Psoas muscle (tissue), 8 donors: ENCODE measurements at regions of chr10 and their contacts with region 1.

Region 1: DNA sequence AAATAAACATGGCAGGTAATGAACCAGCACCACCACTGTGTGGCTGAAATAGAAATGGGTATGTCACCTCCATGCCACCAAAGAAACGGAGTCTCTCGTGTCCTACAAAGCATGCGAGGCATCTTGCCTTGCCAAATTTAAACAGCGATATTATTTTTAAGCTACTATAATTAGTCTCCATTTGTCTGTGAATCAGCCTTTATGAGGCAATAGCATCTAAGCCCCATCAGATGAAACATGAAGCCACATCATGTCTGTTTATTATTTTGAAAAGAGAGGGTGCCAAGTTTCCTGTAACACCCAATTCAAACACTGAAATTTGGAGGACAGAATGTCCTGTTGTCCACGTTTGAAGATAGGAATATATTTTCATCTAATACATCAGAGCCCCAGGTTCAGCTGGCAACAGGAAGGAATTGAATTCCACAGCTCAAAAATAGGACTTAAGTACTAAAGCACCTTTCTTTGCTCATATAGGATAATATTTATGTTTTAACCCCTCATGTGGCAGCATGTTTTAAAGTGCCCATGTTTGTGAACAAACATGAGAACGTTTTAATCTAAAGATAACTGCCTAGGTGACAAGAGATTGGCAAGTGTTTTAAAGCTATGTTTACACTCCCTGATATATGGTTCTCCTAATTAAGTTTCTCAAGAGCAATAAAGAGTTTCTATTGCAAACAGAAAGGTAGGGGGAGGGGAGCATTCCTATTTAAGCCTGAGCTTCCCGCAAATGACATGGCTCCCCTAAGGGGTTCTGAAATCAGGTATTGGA is 86.8 kb downstream of the SORBS1 start:
- DNase-seq: no peak
- ATAC-seq: peak; percentile 69 to 82 (median 74)
- H3K4me3 ChIP-seq: peak overlapping the region; percentile 12
- H3K27ac ChIP-seq: peak overlapping the region; percentile 96
- H3K4me1 ChIP-seq: peaks cover 91% of the 10 kb centered on the region
- H3K27me3 ChIP-seq: no peaks in the 10 kb centered on the region
- CTCF ChIP-seq: peak; percentile 38

Region 2: DNA sequence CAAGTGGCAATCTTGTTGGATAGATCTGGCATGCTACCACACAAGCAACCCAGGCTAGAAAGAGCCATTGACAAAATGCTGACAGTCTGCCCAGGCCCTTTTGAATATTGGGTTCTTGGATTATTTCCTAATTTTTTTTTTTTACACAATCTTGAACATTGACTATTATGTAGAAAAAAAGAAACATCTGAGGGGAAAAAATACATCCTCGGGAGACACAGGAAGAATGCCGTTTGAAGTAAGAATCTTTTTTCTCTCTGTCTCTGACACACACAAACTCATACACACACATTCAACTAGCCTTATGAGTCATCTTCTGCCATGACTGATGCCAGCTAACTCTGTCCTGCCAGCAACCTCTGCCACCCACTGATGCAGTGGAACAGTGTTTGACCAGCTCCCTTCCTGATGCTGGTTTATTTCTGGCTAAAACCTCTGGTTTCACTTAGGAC is 39.6 kb after region 1 on chr10:
- intact Hi-C with region 1: loop called in 1 of 2 experiments (anchors 5 kb)
- DNase-seq: peak; percentile 51 to 76
- ATAC-seq: peak; percentile 90 to 92 (median 91)
- H3K4me3 ChIP-seq: no peak overlapping the region
- H3K27ac ChIP-seq: peak overlapping the region; percentile 66
- H3K4me1 ChIP-seq: peaks cover 67% of the 10 kb centered on the region
- H3K27me3 ChIP-seq: no peaks in the 10 kb centered on the region
- CTCF ChIP-seq: no peak